ENCODE measurements at regions of chr17 and their contacts with region 1.

Region 1: GRCh38 chr17:7583253-7584109 is at the start of gene MPDU1:
- DNase-seq: peak; percentile 90 to 97 (median 96)
- H3K4me3 ChIP-seq: peak within 1 kb of the TSS; percentile 98
- H3K4me3 Mint-ChIP-seq: peak within 1 kb of the TSS; percentile 99 to 100 (median 99)
- H3K27ac ChIP-seq: peak within 1 kb of the TSS; percentile 98
- H3K27ac Mint-ChIP-seq: peak within 1 kb of the TSS; percentile 99 to 100 (median 100)
- H3K4me1 ChIP-seq: peaks cover 40% of the 10 kb centered on the region
- H3K4me1 Mint-ChIP-seq: peaks cover 50 to 60% (median 52%) of the 10 kb centered on the region in 3 donors
- H3K27me3 ChIP-seq: no peaks in the 10 kb centered on the region
- H3K27me3 Mint-ChIP-seq: peaks cover 0 to 4% of the 10 kb centered on the region in 2 donors
- total RNA-seq, gene MPDU1: 115 to 124 TPM

Region 2: GRCh38 chr17:6753006-6753445 is 830.5 kb before region 1 on chr17:
- CTCF ChIA-PET with region 1: no interaction called
- POLR2A ChIA-PET with region 1: no interaction called
- DNase-seq: peak; percentile 25 to 77 (median 36)
- H3K4me3 ChIP-seq: no peak overlapping the region
- H3K4me3 Mint-ChIP-seq: peak overlapping the region; percentile 32 to 84 (median 50)
- H3K27ac ChIP-seq: no peak overlapping the region
- H3K27ac Mint-ChIP-seq: peak overlapping the region; percentile 69 to 97 (median 94)
- H3K4me1 ChIP-seq: peaks cover 33% of the 10 kb centered on the region
- H3K4me1 Mint-ChIP-seq: peaks cover 48 to 56% (median 55%) of the 10 kb centered on the region in 3 donors
- H3K27me3 ChIP-seq: no peaks in the 10 kb centered on the region
- H3K27me3 Mint-ChIP-seq: peaks cover under 1 to 1% of the 10 kb centered on the region in 2 donors

Region 3: GRCh38 chr17:7413346-7413985 is 170.0 kb before region 1 on chr17:
- CTCF ChIA-PET with region 1: no interaction called
- POLR2A ChIA-PET with region 1: no interaction called
- DNase-seq: no peak
- H3K4me3 ChIP-seq: no peak overlapping the region
- H3K4me3 Mint-ChIP-seq: no peak overlapping the region
- H3K27ac ChIP-seq: no peak overlapping the region
- H3K27ac Mint-ChIP-seq: no peak overlapping the region
- H3K4me1 ChIP-seq: no peaks in the 10 kb centered on the region
- H3K4me1 Mint-ChIP-seq: peaks cover 0 to 8% (median 6%) of the 10 kb centered on the region in 3 donors
- H3K27me3 ChIP-seq: no peaks in the 10 kb centered on the region
- H3K27me3 Mint-ChIP-seq: peaks cover 0 to 4% of the 10 kb centered on the region in 2 donors

Region 4: GRCh38 chr17:7572588-7573323 is 10.7 kb before region 1 on chr17:
- CTCF ChIA-PET with region 1: interaction called, 7 read pairs
- POLR2A ChIA-PET with region 1: interaction called, 52 read pairs
- DNase-seq: peak; percentile 99 to 100 (median 100)
- H3K4me3 ChIP-seq: peak overlapping the region; percentile 98
- H3K4me3 Mint-ChIP-seq: peak overlapping the region; percentile 93 to 98 (median 96)
- H3K27ac ChIP-seq: peak overlapping the region; percentile 99
- H3K27ac Mint-ChIP-seq: peak overlapping the region; percentile 96 to 100 (median 98)
- H3K4me1 ChIP-seq: peaks cover 31% of the 10 kb centered on the region
- H3K4me1 Mint-ChIP-seq: peaks cover 39 to 55% (median 48%) of the 10 kb centered on the region in 3 donors
- H3K27me3 ChIP-seq: no peaks in the 10 kb centered on the region
- H3K27me3 Mint-ChIP-seq: peaks cover 0 to 7% of the 10 kb centered on the region in 2 donors

Region 5: GRCh38 chr17:7614422-7615264 is 31.2 kb after region 1 on chr17 and contains the start of gene FXR2:
- CTCF ChIA-PET with region 1: interaction called, 17 read pairs
- POLR2A ChIA-PET with region 1: interaction called, 15 read pairs
- DNase-seq: peak; percentile 98 to 99 (median 98)
- H3K4me3 ChIP-seq: peak within 1 kb of the TSS; percentile 93
- H3K4me3 Mint-ChIP-seq: peak within 1 kb of the TSS; percentile 82 to 96 (median 92)
- H3K27ac ChIP-seq: peak within 1 kb of the TSS; percentile 88
- H3K27ac Mint-ChIP-seq: peak within 1 kb of the TSS; percentile 87 to 99 (median 96)
- H3K4me1 ChIP-seq: peaks cover 26% of the 10 kb centered on the region
- H3K4me1 Mint-ChIP-seq: peaks cover 31 to 41% (median 36%) of the 10 kb centered on the region in 3 donors
- H3K27me3 ChIP-seq: no peaks in the 10 kb centered on the region
- H3K27me3 Mint-ChIP-seq: no peaks in the 10 kb centered on the region
- total RNA-seq, gene FXR2: 45.7 to 45.9 TPM

Region 6: GRCh38 chr17:7627250-7628121 is 44.0 kb after region 1 on chr17 and contains the start of gene SAT2:
- CTCF ChIA-PET with region 1: no interaction called
- POLR2A ChIA-PET with region 1: interaction called, 13 read pairs
- DNase-seq: peak; percentile 80 to 93 (median 82)
- H3K4me3 ChIP-seq: peak within 1 kb of the TSS; percentile 90
- H3K4me3 Mint-ChIP-seq: peak within 1 kb of the TSS; percentile 90 to 95 (median 93)
- H3K27ac ChIP-seq: peak within 1 kb of the TSS; percentile 69
- H3K27ac Mint-ChIP-seq: peak within 1 kb of the TSS; percentile 70 to 97 (median 91)
- H3K4me1 ChIP-seq: peaks cover 10% of the 10 kb centered on the region
- H3K4me1 Mint-ChIP-seq: peaks cover 12 to 20% (median 13%) of the 10 kb centered on the region in 3 donors
- H3K27me3 ChIP-seq: no peaks in the 10 kb centered on the region
- H3K27me3 Mint-ChIP-seq: no peaks in the 10 kb centered on the region
- total RNA-seq, gene SAT2: 18.4 to 21.6 TPM

Measured in CD8-positive, alpha-beta memory T cell (primary cell).